Head of caudate nucleus (tissue), 42 donors: ENCODE measurements at regions of chr6 and their contacts with region 1.

Region 1: DNA sequence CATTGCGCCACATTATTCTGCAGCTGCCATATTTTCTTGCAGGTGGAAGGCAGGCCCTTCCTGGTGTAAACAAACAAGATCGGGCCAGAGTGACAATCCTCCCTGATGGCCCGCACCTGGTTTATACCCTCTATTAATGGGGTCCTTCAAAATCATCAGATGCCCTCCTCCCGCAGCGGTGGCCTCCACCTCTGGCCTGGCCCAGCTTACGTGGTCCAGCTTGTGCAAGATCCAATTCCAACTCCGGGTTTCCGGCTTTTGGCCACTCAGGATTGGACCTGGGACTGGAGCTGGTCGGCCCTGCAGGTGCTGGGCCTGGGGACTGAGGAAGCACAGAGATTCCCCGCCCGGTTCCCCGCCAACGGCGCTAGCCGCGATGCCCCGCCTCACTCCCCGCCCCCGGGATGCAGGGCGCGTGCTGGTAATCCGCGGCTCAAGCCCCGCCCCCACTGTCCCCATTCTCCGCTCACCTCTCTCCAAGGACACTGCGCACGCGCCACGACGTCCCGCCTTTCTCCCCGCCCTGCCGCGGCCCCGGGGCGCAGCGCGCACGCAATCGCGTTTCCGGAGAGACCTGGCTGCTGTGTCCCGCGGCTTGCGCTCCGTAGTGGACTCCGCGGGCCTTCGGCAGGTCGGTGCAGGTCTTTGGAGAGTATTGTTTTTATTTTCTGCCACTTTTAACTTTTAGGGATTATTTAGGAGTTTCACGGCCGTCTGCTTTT is at the start of gene TMEM14B:
- DNase-seq: peak; percentile 97 to 100 (median 99)

Region 2: GRCh38 chr6:10694302-10695085 is 52.9 kb before region 1 on chr6 and contains the starts of genes C6orf52 and PAK1IP1:
- intact Hi-C with region 1: loop called (anchors 1 kb)
- DNase-seq: peak; percentile 92 to 98 (median 95)

Region 3: GRCh38 chr6:10722820-10723566 is 24.4 kb before region 1 on chr6 and contains the start of gene TMEM14C:
- intact Hi-C with region 1: loop called (anchors 2 kb)
- DNase-seq: peak; percentile 93 to 99 (median 97)

Region 4: DNA sequence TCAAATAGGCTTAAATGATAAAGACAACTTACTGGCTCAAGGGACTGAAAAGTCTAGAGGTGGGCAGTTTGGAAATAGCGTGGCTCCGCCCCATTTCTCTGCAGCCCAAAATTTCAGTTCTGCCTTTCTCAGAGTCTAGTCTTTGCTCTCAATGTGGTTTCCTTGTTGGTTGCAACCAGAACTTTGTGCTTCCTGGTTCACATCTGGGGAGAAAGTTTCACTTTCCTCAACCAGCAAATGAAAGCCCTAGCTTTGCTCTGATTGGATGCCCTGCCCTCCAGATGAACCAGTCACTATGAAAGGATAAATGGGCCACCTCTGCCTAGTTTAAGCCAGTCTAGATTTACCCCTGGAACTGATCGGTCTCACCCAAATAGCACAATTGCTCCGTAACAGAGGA is 154.4 kb after region 1 on chr6:
- intact Hi-C with region 1: no loop called
- DNase-seq: peak in 15 of 42 donors; percentile 8 to 52 (median 15)

Region 5: GRCh38 chr6:10991115-10991514 is 243.7 kb after region 1 on chr6:
- intact Hi-C with region 1: no loop called
- DNase-seq: peak in 1 of 42 donors; percentile 10